HEK293T (cell line): ENCODE measurements at regions of chr5 and their contacts with region 1.

Region 1: GRCh38 chr5:69024241-69024651 is 69.6 kb upstream of the SLC30A5 start:
- DNase-seq: peak; percentile 74

Region 2: DNA sequence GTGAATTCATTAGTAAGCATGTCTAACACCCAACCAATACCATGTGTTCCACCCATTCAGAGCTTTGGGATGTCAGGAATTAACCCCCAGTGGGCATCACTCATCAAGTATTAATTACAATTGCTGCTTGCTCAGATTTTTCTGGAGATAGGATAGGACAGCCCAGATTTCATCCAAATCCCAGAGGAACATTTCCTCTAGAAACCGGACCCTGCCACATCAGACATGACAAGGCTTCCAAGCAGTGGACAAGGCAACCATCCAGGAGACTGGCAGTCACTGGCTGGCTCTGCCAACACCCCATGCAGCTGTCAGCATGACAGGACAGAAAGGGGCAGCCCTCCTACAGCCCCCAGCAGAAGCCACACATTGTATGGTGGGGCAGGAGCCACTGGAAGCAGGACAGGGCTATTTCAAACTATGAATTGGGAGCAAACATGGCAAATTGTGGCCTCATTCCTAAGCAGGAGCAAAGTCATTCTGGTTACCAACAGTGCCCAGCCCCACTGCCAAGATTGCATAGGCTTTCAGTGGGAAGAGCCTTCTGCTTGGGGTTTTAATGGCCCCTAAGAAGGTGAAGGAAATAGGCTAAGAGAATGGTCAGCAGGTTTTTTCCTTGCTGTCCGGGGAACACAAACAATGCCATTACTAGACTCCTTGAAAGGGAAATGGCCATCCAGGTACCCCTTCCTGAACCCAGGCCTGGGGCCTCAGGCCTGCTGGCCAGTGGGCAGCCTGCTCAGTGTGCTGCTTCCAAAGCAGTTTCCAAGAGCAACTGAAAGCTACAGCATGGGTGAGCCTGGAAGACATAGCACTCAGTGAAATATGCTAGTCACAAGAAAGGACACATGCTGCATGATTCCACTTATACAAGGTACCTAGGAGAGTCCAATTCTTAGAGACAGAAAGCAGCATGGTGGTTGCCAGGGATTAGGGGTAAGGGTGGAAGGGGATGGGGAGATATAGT is 225.1 kb before region 1 on chr5:
- CTCF ChIA-PET with region 1: no interaction called
- POLR2A ChIA-PET with region 1: no interaction called
- DNase-seq: no peak

Region 3: DNA sequence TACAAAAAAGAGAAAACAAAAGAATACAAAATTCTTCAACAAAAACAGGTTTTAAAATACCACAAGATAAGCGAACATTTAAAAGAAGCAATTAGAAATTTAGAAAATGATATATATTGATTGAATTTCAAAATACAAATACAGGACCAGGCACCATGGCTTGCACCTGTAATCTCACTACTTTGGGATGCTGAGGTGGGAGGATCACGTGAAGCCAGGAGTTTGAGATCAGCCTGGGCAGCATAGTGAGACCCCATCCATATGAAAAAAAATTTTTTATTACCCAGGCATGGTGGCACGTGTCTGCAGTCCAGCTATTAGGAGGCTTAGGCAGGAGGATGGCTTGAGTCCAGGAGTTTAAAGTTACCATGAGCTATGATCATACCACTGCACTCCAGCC is 40.3 kb before region 1 on chr5:
- CTCF ChIA-PET with region 1: interaction called, 10 read pairs
- POLR2A ChIA-PET with region 1: no interaction called
- DNase-seq: no peak

Region 4: GRCh38 chr5:68998652-68999051 is 25.6 kb before region 1 on chr5:
- CTCF ChIA-PET with region 1: no interaction called
- POLR2A ChIA-PET with region 1: no interaction called
- DNase-seq: no peak

Region 5: GRCh38 chr5:69048230-69048629 is 24.0 kb after region 1 on chr5:
- CTCF ChIA-PET with region 1: interaction called, 13 read pairs
- POLR2A ChIA-PET with region 1: no interaction called
- DNase-seq: no peak